Caco-2 (cell line): ENCODE measurements at regions of chr2 and their contacts with region 1.

Region 1: DNA sequence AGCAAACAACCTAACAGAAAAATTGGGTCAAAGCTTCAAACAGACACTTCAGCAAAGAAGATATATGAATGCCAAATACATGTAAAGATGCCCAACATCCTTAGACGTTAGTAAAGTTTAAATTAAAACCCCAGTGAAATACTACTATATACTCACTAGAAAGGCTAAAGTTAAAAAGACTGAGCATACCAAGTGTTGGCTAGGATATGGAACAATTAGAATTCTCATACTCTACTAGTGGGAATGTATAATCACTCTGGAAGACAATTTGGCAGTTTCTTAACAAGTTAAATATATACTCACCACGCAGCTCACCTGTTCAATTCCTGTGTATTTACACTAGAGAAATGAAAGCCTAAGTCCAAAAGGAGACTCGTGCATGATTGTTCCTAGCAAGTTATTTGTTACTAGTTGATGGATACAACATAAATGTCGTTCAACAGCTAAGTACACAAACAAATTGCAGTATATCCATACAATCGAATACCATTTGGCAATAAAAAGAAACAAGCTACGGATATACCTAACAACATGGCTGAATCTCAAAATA is 183.7 kb upstream of the ZFP36L2 start:
- DNase-seq: no peak
- H3K4me3 ChIP-seq: no peak overlapping the region
- H3K4me3 Mint-ChIP-seq: no peak overlapping the region
- H3K27ac Mint-ChIP-seq: no peak overlapping the region
- H3K4me1 ChIP-seq: no peaks in the 10 kb centered on the region; the same call in 1 of the 2 replicates
- H3K4me1 Mint-ChIP-seq: peaks cover 8% of the 10 kb centered on the region
- H3K27me3 ChIP-seq: no peaks in the 10 kb centered on the region
- H3K27me3 Mint-ChIP-seq: no peaks in the 10 kb centered on the region
- CTCF ChIP-seq: no peak

Region 2: DNA sequence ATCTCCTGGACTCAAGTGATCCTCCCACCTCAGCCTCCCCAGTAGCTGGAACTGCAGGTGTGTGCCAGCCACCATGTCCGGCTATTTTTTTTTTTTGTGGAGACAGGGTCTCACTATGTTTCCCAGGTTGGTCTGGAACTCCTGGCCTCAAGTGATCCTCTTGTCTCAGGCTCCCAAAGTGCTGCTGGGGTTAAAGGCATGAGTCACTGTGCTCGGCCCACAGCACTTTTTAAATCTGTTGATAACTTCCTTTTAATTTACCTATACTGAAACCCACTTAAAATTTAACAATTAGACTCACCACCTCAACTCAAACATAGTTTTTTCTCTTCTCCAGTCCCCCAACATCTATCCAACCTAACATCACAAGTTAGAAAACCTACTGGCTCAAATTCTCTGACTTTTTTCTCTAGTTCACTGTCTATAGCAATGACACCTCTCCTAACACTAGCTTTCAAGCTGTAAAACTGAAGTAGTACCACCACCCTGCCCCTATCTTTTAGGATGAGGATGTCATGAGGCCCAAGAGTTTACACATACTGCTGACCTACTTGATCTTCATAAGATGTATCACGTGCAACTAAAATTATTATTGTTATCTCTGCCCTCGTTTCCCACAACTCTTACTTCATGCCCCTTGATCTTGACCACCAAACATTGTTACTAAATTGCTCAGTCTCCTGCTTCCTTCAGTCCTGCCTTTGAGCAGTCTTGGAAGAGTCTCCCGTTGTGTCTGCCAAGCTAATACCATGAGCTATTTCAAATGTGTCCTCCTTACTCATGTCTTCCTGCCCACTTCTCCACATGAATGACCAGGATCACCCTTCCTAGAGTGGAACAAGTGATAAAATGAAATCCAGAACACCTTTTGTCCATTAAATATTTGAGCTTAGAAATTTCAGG is 41.4 kb before region 1 on chr2:
- CTCF ChIA-PET with region 1: no interaction called
- POLR2A ChIA-PET with region 1: no interaction called
- intact Hi-C with region 1: no loop called
- DNase-seq: no peak
- H3K4me3 ChIP-seq: no peak overlapping the region
- H3K4me3 Mint-ChIP-seq: no peak overlapping the region
- H3K27ac Mint-ChIP-seq: peak overlapping the region; percentile 11
- H3K4me1 ChIP-seq: peaks cover 44% of the 10 kb centered on the region
- H3K4me1 Mint-ChIP-seq: peaks cover 46% of the 10 kb centered on the region
- H3K27me3 ChIP-seq: no peaks in the 10 kb centered on the region
- H3K27me3 Mint-ChIP-seq: no peaks in the 10 kb centered on the region
- CTCF ChIP-seq: no peak

Region 3: GRCh38 chr2:43399515-43400264 is 10.4 kb before region 1 on chr2:
- CTCF ChIA-PET with region 1: interaction called, 10 read pairs
- POLR2A ChIA-PET with region 1: no interaction called
- intact Hi-C with region 1: no loop called
- DNase-seq: no peak
- H3K4me3 ChIP-seq: no peak overlapping the region
- H3K4me3 Mint-ChIP-seq: no peak overlapping the region
- H3K27ac Mint-ChIP-seq: no peak overlapping the region
- H3K4me1 ChIP-seq: peaks cover 44% of the 10 kb centered on the region
- H3K4me1 Mint-ChIP-seq: peaks cover 37% of the 10 kb centered on the region
- H3K27me3 ChIP-seq: no peaks in the 10 kb centered on the region
- H3K27me3 Mint-ChIP-seq: no peaks in the 10 kb centered on the region
- CTCF ChIP-seq: no peak

Region 4: DNA sequence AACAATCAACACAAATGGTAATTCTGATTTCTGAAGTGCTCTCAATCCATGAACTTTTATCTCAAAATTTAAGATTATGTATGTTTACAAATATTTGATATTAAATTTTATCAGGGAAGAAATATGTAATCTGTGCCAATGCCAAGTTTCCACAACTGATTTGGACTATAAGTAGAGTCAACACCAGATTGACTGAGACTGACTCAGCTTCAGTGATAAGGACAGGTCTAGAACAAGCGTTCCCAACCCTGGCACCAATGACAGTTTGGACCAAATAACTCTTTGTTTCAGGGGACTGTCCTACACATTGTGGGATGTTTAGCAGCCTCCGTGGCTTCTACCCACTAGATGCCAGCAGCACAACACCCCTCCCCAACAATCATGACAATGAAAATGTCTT is 20.3 kb after region 1 on chr2:
- CTCF ChIA-PET with region 1: no interaction called
- POLR2A ChIA-PET with region 1: no interaction called
- intact Hi-C with region 1: no loop called
- DNase-seq: no peak
- H3K4me3 ChIP-seq: no peak overlapping the region
- H3K4me3 Mint-ChIP-seq: no peak overlapping the region
- H3K27ac Mint-ChIP-seq: no peak overlapping the region
- H3K4me1 ChIP-seq: peaks cover 27% of the 10 kb centered on the region
- H3K4me1 Mint-ChIP-seq: peaks cover 13% of the 10 kb centered on the region
- H3K27me3 ChIP-seq: no peaks in the 10 kb centered on the region
- H3K27me3 Mint-ChIP-seq: no peaks in the 10 kb centered on the region
- CTCF ChIP-seq: no peak